ENCODE measurements at regions of chr17 and their contacts with region 1.

Region 1: DNA sequence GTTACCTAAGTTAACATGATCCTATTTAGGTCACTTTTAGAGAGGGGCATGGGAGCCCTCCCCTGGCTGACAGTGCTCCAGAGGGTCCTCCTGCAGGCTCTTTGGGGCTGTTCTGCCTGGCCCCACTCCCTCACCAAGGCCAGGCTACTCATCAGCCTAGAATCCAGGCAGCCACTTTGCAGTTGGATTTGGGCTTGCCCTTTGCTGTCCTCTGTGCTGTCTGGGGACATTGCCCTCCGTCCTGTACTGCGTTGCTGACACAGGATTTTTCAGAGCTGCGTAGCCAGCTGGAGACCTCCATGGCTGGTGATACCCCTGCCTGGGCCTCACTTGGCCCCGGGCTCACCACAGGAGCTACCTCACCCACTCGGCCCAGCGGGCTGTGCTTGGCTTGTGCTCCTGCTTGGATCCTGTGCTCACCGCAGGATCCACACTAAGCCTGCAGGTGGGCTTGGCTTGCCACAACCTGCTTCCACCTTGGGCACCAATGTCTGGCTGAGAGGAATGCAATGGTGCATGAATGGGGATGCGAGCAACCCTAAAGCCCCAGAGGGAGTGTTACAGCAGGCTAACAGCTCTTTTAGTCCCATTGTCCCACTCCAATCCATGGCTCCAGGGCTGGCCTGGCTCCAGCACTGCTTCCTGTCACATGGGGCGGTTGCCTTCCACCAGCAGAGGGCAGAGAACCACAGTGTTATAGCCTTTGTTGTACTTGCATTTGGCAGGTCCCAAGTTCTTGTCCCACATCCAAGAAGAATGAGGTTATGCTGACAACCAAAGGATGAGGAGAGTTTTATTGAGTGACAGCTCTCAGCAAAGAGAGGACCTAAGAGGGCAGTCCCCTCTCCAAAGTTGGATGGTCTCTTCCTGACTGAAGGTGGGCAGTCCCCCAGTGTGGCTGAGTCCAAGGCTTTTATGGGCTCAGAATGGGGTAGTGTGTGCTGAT is 21.5 kb downstream of the CCL4 start:
- DNase-seq: no peak
- H3K4me3 ChIP-seq: no peak overlapping the region
- H3K27ac ChIP-seq: no peak overlapping the region
- H3K4me1 ChIP-seq: peaks cover 10 to 43% (median 16%) of the 10 kb centered on the region in 4 donors
- H3K27me3 ChIP-seq: no peaks in the 10 kb centered on the region
- CTCF ChIP-seq: peak in 1 of 5 experiments; percentile 13
- EP300 ChIP-seq: no peak
- POLR2A ChIP-seq: no peak

Region 2: DNA sequence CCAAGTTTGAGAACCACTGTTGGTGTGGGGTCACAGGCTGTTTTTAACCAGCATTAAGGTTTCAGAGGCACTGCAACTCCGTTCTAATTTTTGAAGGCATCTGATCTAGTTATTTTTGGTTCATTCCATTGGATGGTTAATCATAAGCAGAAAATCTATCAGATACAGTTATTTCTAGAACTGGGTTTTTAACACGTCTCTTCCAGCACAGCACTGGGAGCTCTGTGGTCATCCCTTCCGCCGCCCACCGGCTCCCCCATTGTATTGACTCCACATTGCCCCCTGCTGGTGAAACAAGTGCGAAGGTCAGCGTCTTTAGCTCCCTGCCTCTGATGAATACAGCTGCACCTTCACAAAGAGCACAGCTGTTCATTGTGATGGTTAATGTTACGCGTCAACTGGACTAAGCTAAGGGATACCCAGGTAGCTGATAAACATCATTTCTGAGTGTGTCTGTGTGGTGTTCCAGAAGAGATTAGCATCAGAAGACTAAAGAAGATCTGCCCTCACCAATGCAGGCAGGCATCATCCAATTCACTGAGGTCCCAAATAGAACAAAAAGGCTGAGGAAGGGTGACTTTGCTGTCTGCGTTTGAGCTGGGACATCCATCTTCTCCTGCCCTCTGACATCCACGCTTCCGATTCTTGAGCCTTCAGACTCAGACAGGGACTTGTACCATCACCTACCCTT is 52.6 kb before region 1 on chr17:
- in situ Hi-C with region 1: no loop called
- intact Hi-C with region 1: no loop called
- DNase-seq: peak; percentile 61
- H3K4me3 ChIP-seq: no peak overlapping the region
- H3K27ac ChIP-seq: no peak overlapping the region
- H3K4me1 ChIP-seq: peaks cover 0 to 3% (median 0%) of the 10 kb centered on the region in 4 donors
- H3K27me3 ChIP-seq: no peaks in the 10 kb centered on the region
- CTCF ChIP-seq: peak; percentile 53 to 68 (median 62)
- EP300 ChIP-seq: no peak
- POLR2A ChIP-seq: no peak

Region 3: GRCh38 chr17:36463916-36464315 is 338.8 kb after region 1 on chr17:
- in situ Hi-C with region 1: loop called in 1 of 4 experiments (anchors 25 kb)
- intact Hi-C with region 1: no loop called
- DNase-seq: peak; percentile 69
- H3K4me3 ChIP-seq: no peak overlapping the region
- H3K27ac ChIP-seq: no peak overlapping the region
- H3K4me1 ChIP-seq: no peaks in the 10 kb centered on the region
- H3K27me3 ChIP-seq: peaks cover 76% of the 10 kb centered on the region
- CTCF ChIP-seq: no peak
- EP300 ChIP-seq: no peak
- POLR2A ChIP-seq: no peak